ENCODE measurements at regions of chr18 and their contacts with region 1.

Region 1: GRCh38 chr18:111292-112014 is 46.9 kb upstream of the USP14 start:
- DNase-seq: peak; percentile 70 to 79 (median 78)
- H3K4me3 ChIP-seq: peak overlapping the region in 1 of 2 donors; percentile 49
- H3K4me3 Mint-ChIP-seq: peak overlapping the region; percentile 79 to 97 (median 86)
- H3K27ac ChIP-seq: peak overlapping the region; percentile 70
- H3K27ac Mint-ChIP-seq: peak overlapping the region; percentile 81 to 98 (median 96)
- H3K4me1 ChIP-seq: peaks cover 6% of the 10 kb centered on the region
- H3K4me1 Mint-ChIP-seq: peaks cover 6 to 24% (median 10%) of the 10 kb centered on the region in 4 donors
- H3K27me3 ChIP-seq: no peaks in the 10 kb centered on the region
- H3K27me3 Mint-ChIP-seq: peaks cover 0 to 2% of the 10 kb centered on the region in 2 donors

Region 2: DNA sequence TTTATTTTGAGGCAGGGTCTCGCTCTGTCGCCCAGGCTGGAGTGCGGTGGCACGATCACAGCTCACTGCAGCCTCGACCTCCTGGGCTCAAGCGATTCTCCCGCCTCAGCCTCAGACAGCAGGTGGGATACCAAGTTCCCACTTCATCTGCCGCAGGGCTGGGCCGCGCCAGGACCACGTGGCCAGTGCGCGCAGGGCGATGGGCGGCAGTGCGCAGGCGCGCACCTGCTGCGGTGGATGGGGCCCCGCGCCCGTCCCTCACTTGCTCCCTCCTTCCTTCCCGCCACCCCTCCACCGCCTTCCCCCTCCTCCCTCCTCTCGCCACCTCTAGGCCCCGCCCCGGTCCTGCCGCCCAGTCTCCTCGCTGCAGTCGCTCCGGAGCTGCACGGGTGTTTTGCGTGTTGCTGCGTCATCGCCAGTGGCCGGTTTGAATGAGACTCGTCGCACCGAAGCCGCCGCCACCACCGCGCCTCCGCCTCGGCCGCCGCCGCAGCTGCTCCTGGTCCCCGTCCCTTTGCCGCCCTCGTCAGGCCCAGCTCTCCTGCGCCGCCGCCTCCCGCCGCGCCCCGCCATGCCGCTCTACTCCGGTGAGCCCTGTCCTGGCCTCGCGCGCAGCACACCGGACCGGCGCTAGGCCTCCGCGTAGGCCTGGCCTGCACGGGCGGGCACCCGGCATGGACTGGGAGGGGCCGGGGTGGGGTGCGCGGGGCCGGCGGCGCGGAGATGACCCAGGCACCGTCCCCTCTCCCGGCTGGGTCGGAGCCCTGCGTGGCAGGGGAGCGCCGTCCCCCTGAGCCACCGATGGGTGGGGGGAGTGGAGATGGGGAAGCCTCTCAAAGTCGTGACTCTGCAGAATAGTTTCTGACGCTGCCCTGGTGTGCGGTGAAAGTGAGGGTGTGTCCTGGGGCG is 46.9 kb after region 1 on chr18 and contains the start of gene USP14:
- CTCF ChIA-PET with region 1: no interaction called
- POLR2A ChIA-PET with region 1: no interaction called
- intact Hi-C with region 1: loop called (anchors 1 kb)
- DNase-seq: peak; percentile 93 to 98 (median 96)
- H3K4me3 ChIP-seq: peak within 1 kb of the TSS; percentile 18 to 81
- H3K4me3 Mint-ChIP-seq: peak within 1 kb of the TSS; percentile 88 to 98 (median 96)
- H3K27ac ChIP-seq: peak within 1 kb of the TSS; percentile 81
- H3K27ac Mint-ChIP-seq: peak within 1 kb of the TSS; percentile 91 to 98 (median 95)
- H3K4me1 ChIP-seq: peaks cover 29% of the 10 kb centered on the region
- H3K4me1 Mint-ChIP-seq: peaks cover 18 to 35% (median 29%) of the 10 kb centered on the region in 4 donors
- H3K27me3 ChIP-seq: no peaks in the 10 kb centered on the region
- H3K27me3 Mint-ChIP-seq: no peaks in the 10 kb centered on the region
- total RNA-seq, gene USP14: 42.6 to 43.6 TPM

Region 3: GRCh38 chr18:607930-608329 is 496.5 kb after region 1 on chr18:
- CTCF ChIA-PET with region 1: no interaction called
- POLR2A ChIA-PET with region 1: no interaction called
- intact Hi-C with region 1: no loop called
- DNase-seq: no peak
- H3K4me3 ChIP-seq: no peak overlapping the region
- H3K4me3 Mint-ChIP-seq: no peak overlapping the region
- H3K27ac ChIP-seq: no peak overlapping the region
- H3K27ac Mint-ChIP-seq: no peak overlapping the region
- H3K4me1 ChIP-seq: no peaks in the 10 kb centered on the region
- H3K4me1 Mint-ChIP-seq: no peaks in the 10 kb centered on the region
- H3K27me3 ChIP-seq: no peaks in the 10 kb centered on the region
- H3K27me3 Mint-ChIP-seq: peaks cover 6 to 12% of the 10 kb centered on the region in 2 donors